Thyroid gland (tissue), 4 donors: ENCODE measurements at regions of chr19 and their contacts with region 1.

Region 1: DNA sequence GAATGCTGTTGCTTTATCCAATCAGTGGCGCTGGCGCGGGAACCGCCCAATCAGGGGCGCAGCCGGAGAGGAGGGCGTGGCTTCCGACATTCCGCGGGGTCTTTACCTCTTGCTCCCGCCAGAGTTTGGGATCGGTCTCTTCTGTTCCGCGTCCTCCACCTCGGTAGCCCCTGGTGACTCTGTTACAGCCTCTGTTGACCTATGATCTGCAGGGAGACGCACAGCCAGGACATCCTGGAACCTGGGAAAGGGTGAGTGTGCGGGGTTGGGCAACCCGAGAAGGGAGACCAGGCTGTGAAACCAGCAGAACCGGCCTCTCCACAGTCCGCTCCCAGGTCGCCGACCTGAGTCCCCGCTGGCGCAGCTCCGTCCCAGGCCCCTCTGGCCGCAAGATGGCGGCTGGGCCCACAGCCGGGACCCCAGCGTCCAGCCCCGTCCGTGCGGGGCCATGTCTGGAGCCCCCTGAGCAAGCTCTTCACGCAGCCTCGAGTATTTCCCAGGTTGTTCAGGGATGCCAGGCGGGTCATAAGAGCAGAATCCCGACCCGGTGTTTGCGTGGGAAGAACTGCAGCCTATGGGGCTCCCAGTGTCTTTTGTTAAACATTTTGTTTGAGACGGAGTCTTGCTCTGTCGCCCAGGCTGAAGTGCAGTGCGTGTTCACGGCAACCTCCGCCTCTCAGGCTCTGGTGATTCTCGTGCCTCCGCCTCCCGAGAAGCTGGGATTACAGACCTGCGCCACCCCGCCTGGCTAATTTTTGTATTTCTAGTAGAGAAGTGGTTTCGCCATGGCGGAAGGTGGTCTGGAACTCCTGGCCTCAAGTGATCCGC is 4.4 kb upstream of the ZNF681 start:
- DNase-seq: peak; percentile 93
- H3K4me3 ChIP-seq: peak overlapping the region; percentile 27 to 67 (median 38)
- H3K27ac ChIP-seq: peak overlapping the region; percentile 64 to 83 (median 82)
- H3K4me1 ChIP-seq: no peaks in the 10 kb centered on the region
- H3K27me3 ChIP-seq: no peaks in the 10 kb centered on the region
- CTCF ChIP-seq: peak in 1 of 6 experiments; percentile 3
- POLR2A ChIP-seq: peak; percentile 63 to 87

Region 2: GRCh38 chr19:23686621-23687423 is 76.3 kb before region 1 on chr19 and contains the start of gene ZNF675:
- intact Hi-C with region 1: loop called (anchors 5 kb)
- DNase-seq: peak; percentile 95 to 96
- H3K4me3 ChIP-seq: peak within 1 kb of the TSS; percentile 4 to 90 (median 64)
- H3K27ac ChIP-seq: peak within 1 kb of the TSS; percentile 75 to 81 (median 79)
- H3K4me1 ChIP-seq: peaks cover 4 to 11% of the 10 kb centered on the region in 2 donors
- H3K27me3 ChIP-seq: no peaks in the 10 kb centered on the region
- CTCF ChIP-seq: peak in 1 of 6 experiments; percentile 7
- POLR2A ChIP-seq: peak in 1 of 2 donors; percentile 70
- total RNA-seq, gene ZNF675: 16.7 to 31.5 (median 22.4) TPM